ENCODE measurements at regions of chr3 and their contacts with region 1.

Region 1: DNA sequence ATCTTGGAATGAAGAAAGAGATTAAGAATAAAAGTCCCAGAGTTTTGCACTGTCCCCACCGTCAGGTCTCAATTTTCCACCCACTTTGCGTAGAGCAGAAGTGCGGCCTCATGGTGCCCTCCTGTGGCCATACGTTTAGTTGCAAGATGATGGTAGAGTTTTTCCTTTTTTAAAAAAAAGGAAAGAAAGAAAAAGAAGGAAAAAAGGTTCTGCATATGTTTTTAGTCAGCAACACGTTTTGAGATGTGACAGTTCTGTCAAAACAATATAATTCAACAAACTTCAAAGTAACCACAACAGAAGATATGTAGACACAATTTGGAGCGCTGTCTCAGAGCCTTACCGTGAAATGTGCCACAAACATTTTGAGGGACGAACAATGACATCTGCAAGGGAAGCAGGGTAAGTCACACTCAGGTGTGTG is 24.6 kb downstream of the EBLN2 start:
- DNase-seq: peak in 2 of 4 donors; percentile 68 to 79
- ATAC-seq: peak; percentile 91
- H3K4me3 ChIP-seq: no peak overlapping the region
- H3K27ac ChIP-seq: no peak overlapping the region
- H3K4me1 ChIP-seq: peaks cover 0 to 7% of the 10 kb centered on the region in 2 donors
- H3K27me3 ChIP-seq: no peaks in the 10 kb centered on the region
- CTCF ChIP-seq: peak; percentile 59 to 62

Region 2: DNA sequence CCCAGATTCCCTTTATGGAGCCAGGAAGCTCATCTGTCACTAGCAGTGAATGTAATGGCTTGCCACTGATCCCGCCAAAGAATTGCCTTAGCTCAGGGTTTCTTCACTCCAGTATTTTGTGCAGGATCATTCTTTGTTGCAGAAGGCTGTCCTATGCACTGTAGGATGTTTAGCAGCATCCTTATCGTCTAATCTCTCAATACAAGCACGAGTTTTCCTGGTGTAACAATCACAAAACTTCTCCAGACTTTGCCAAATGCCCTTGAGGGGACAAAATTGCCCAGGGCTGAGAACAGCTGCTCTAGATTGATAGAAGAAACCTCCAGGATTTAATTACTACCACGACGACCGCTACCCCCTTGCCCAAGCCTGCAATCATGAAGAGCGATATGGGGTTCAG is 231.1 kb before region 1 on chr3:
- intact Hi-C with region 1: loop called in 1 of 2 experiments (anchors 10 kb)
- DNase-seq: no peak
- ATAC-seq: no peak
- H3K4me3 ChIP-seq: no peak overlapping the region
- H3K27ac ChIP-seq: no peak overlapping the region
- H3K4me1 ChIP-seq: no peaks in the 10 kb centered on the region
- H3K27me3 ChIP-seq: no peaks in the 10 kb centered on the region
- CTCF ChIP-seq: no peak

Region 3: DNA sequence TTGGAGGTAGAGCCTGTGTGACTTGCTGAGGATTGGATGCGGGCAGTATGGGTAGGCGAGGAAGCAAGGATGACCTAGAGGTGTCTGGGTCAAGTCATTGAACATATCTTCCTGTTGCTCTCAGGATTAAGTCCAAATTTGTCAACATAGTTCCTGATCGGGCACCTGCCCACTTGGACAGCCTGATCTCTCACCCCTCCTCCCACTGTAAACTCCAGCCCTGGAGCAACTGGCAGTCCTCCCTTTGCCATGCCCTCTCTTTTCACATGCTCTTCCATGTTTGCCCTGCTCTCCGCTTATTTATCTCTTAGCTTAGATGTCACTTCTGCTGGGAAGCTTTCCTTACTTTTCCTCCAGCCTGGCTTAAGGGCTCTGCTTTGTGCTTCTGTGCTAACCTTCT is 137.1 kb before region 1 on chr3:
- intact Hi-C with region 1: loop called in 1 of 2 experiments (anchors 10 kb)
- DNase-seq: no peak
- ATAC-seq: no peak
- H3K4me3 ChIP-seq: no peak overlapping the region
- H3K27ac ChIP-seq: no peak overlapping the region
- H3K4me1 ChIP-seq: peaks cover 0 to 10% of the 10 kb centered on the region in 2 donors
- H3K27me3 ChIP-seq: no peaks in the 10 kb centered on the region
- CTCF ChIP-seq: no peak

Region 4: DNA sequence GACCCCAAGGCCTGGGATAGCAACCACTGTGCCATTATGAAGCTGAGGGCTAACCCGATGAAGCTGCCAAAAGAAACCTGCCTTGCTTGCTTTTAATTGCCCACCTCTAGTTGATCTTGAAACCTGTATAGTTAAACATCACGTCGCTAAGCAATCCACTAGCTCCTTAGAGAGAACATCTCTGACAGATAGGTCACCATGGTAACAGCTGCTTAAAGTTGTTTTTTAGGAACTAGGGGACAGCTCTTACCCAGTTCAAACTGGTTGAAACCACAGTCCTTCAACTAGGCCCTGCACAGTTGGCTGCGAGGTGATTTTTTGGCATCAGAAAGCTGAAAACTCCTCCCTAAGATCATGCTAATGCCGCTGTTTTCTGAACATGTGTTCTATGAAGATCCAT is 111.1 kb after region 1 on chr3:
- intact Hi-C with region 1: no loop called
- DNase-seq: no peak
- ATAC-seq: no peak
- H3K4me3 ChIP-seq: no peak overlapping the region
- H3K27ac ChIP-seq: no peak overlapping the region
- H3K4me1 ChIP-seq: no peaks in the 10 kb centered on the region
- H3K27me3 ChIP-seq: no peaks in the 10 kb centered on the region
- CTCF ChIP-seq: no peak

Measured in left lung (tissue), 14 donors.